ENCODE measurements at regions of chr12 and their contacts with region 1.

Region 1: DNA sequence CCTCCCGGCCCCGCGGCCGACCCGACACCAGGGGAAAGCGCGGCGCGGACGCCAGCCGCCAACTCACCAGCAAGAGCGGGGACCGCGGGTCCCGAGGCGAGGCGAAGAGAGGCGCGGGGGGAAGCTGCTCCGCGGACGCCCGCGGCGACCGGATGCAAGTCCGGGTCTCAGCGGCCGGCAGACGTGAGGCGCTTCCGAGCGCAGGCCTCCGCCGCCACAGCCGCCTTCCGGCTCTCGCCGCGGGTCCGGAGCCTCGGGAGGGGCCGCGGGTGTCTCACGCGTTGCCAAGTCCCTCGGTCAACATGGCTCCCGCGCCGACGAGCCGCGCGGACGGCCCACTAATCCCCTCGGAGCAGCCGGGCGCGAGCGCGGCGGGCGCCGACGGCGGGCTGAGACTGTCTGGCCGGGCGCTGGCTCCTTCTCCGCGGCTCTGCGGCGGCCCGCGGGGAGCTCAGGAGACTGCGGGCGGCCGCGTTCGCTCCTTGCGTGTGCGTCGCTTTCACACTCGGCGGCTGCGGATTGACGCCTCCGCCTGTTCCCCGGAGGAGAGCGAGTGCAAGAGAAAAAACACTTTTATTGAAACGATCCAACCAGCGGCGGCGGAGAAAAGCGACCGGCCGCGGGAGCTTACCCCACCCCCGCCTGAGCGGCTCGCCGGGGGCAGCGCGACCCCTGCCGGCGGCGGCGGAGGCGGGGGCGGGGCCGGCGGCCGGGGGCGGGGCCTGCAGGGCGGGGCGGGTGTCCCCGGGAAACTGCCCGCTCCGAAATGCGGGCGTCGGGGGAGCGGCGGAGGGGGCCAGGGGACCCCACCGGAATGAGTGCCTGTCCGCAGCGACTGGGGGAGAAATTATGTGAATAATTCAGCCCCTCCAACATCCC is at the start of gene CDK17:
- DNase-seq: peak; percentile 87
- ATAC-seq: peak; percentile 90 to 93
- total RNA-seq, gene CDK17: 17.0 to 35.6 TPM

Region 2: GRCh38 chr12:95942524-95943329 is 457.4 kb before region 1 on chr12 and contains the start of gene CCDC38:
- intact Hi-C with region 1: no loop called
- DNase-seq: peak; percentile 84
- ATAC-seq: peak; percentile 98 to 99
- total RNA-seq, gene CCDC38: 0.24 TPM in 1 of 2 donors, not detected in the other

Region 3: DNA sequence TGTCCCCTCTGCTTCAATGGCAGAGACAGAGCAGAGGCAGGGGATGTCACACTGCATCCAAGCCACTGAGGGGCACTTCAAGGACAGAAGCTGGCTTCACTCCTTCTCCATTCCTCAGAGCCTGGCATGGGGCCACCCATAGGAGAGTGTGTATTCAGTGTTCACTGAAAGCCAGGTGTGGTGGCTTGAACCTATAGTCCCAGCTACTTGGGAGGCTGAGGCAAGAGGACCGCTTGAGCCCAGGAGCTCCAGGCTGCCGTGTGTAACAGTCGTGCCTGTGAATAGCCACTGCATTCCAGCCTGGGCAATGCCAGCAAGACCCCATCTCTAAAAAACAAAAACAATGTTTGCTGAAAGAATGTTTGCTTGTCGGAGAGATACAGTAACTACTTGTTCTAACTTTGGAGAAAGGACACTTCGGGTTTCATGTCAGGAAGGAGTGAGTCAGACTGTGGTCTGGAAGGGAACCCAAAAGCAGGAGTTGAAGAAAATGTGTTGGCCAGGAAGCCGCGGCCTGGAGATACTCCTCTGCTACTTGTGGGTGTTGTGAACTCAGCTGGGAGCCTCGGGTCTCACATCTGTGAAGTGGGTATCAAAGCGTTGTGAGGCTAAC is 162.6 kb before region 1 on chr12:
- intact Hi-C with region 1: loop called (anchors 10 kb)
- DNase-seq: peak; percentile 77
- ATAC-seq: peak in 1 of 2 donors; percentile 42

Region 4: GRCh38 chr12:96303653-96304052 is 96.5 kb before region 1 on chr12:
- intact Hi-C with region 1: loop called in 1 of 2 experiments (anchors 10 kb)
- DNase-seq: no peak
- ATAC-seq: no peak

Measured in left cardiac atrium (tissue), 4 donors.